Caco-2 (cell line): ENCODE measurements at regions of chr16 and their contacts with region 1.

Region 1: GRCh38 chr16:66552286-66553177 is at the start of gene CKLF:
- DNase-seq: peak; percentile 90 to 96
- H3K4me3 ChIP-seq: peak within 1 kb of the TSS; percentile 73
- H3K4me3 Mint-ChIP-seq: peak within 1 kb of the TSS; percentile 87
- H3K27ac Mint-ChIP-seq: peak within 1 kb of the TSS; percentile 81
- H3K4me1 ChIP-seq: peaks cover 28% of the 10 kb centered on the region
- H3K4me1 Mint-ChIP-seq: peaks cover 47% of the 10 kb centered on the region
- H3K27me3 ChIP-seq: no peaks in the 10 kb centered on the region
- H3K27me3 Mint-ChIP-seq: no peaks in the 10 kb centered on the region
- CTCF ChIP-seq: no peak
- total RNA-seq, gene CKLF: 96.4 and 103 TPM in 2 replicates

Region 2: DNA sequence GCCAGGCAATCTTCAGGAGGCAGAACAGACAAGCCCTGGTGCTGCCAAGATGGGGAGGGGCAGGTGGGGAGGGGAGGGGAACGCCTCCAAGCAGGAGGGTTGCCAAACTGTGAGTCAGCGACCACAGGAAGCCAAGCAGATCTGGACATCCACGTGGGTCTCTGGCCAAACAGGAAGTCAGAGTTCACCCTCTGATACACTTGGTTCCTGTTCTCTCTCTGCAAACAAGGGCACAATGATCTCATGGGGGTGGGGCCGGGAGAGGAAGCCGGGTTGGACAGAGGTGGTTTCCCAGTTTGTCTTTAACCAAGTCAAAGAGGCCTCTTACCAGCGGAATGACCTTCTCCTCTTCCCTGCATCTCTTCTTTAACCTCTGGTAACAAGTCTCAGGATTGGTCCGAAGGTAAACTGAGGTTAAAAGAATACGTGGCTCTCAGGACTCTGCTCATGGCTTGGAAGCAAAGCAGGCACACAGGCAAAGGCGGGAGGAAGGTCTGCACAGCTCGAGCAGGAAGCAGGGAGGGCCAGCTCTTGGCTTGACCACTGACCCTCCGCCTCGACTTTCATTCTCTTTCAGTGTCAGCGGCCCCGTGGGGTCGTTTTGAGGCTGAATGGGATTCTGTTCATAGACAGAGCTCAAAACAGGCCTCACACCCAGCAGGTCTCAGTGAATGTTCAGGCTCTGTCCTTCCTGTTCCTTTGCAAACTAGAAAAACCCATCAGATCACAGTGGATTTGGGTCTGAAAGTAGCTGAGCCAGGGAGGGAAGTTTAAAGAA is 35.5 kb before region 1 on chr16:
- CTCF ChIA-PET with region 1: no interaction called
- POLR2A ChIA-PET with region 1: no interaction called
- intact Hi-C with region 1: loop called (anchors 1 kb)
- DNase-seq: peak; percentile 92 to 96
- H3K4me3 ChIP-seq: no peak overlapping the region
- H3K4me3 Mint-ChIP-seq: peak overlapping the region; percentile 72
- H3K27ac Mint-ChIP-seq: peak overlapping the region; percentile 98
- H3K4me1 ChIP-seq: peaks cover 37% of the 10 kb centered on the region
- H3K4me1 Mint-ChIP-seq: peaks cover 42% of the 10 kb centered on the region
- H3K27me3 ChIP-seq: no peaks in the 10 kb centered on the region
- H3K27me3 Mint-ChIP-seq: no peaks in the 10 kb centered on the region
- CTCF ChIP-seq: no peak